Aorta (tissue), 5 donors: ENCODE measurements at regions of chr20 and their contacts with region 1.

Region 1: DNA sequence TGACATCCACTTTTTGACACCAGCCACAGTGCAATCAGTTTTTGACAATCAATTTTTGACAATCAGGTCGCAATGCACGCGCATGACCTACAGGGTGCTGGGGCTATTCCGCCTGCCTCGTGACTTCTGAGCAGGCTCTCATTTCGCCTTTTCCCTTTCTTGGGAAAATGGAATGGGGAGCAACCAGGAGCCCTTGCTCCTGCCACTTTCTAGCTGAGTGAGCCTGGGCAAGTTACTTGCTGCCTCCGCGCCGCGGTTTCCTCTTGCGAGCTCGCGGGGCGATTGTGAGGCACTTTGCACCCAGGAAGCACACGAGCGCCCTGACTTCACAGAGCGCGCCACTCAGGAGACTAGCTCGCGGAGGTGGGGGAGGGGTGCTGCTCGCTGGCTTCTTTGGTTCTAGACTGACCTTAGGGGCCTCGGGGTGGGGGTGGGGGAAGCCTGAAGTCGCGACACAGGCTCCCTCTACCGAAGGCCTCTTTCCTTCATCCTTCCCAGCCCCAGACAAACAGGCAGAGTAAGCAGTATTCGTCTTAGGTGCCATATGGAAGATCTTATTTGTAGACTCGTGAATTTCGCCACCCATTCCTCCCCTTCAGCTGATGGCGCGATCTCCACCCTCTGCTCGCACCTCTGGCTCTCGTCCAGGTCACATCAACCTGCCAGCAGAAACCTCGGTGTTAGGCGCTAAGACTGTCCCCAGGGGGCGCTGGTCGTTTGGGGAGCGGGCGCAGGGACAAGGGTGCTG is 4.6 kb downstream of the TP53TG5 start:
- DNase-seq: peak; percentile 95 to 98
- ATAC-seq: peak; percentile 92
- H3K4me3 ChIP-seq: peak overlapping the region; percentile 37 to 46
- H3K27ac ChIP-seq: peak overlapping the region; percentile 44 to 92
- H3K4me1 ChIP-seq: no peaks in the 10 kb centered on the region
- H3K27me3 ChIP-seq: no peaks in the 10 kb centered on the region

Region 2: GRCh38 chr20:45406259-45407066 is 32.9 kb after region 1 on chr20:
- intact Hi-C with region 1: loop called in 1 of 2 experiments (anchors 1 kb)
- DNase-seq: peak; percentile 87 to 96
- ATAC-seq: peak; percentile 85
- H3K4me3 ChIP-seq: peak overlapping the region; percentile 76 to 85
- H3K27ac ChIP-seq: peak overlapping the region; percentile 68 to 95
- H3K4me1 ChIP-seq: peaks cover 2 to 9% of the 10 kb centered on the region in 2 donors
- H3K27me3 ChIP-seq: no peaks in the 10 kb centered on the region

Region 3: DNA sequence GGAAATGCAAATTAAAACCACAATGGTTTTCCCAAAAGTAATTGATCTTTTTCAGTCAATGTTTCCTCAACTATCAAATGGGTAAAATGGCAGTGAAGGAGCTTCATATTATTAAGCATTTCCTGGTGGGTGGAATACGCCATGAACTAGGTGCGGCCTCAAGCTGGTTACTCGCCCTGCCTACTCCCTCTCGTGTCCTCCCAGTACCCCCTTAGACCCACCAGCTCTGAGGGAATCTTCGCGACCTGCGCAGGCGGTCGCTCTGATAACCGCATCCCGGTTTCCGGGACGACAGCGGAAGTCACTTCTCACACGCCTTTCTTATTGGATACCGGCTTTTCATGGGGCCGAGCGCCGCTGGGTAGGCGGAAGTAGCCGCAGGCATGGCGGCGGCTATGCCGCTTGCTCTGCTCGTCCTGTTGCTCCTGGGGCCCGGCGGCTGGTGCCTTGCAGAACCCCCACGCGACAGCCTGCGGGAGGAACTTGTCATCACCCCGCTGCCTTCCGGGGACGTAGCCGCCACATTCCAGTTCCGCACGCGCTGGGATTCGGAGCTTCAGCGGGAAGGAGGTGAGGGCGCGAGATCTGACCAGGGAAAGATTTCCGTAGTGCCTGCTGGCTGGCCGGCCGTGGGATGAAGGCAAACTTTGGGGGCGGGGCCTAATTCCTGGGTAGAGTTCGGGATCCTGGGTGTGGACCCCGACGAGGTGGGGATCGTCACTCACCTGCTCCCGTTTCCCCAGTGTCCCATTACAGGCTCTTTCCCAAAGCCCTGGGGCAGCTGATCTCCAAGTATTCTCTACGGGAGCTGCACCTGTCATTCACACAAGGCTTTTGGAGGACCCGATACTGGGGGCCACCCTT is 42.5 kb after region 1 on chr20 and contains the start of gene PIGT:
- intact Hi-C with region 1: loop called in 1 of 2 experiments (anchors 5 kb)
- DNase-seq: peak; percentile 92 to 93
- ATAC-seq: peak; percentile 93
- H3K4me3 ChIP-seq: peak within 1 kb of the TSS; percentile 57 to 82
- H3K27ac ChIP-seq: peak within 1 kb of the TSS; percentile 44 to 71
- H3K4me1 ChIP-seq: no peaks in the 10 kb centered on the region
- H3K27me3 ChIP-seq: no peaks in the 10 kb centered on the region
- total RNA-seq, gene PIGT: 113 TPM

Region 4: GRCh38 chr20:45436732-45437391 is 63.3 kb after region 1 on chr20:
- intact Hi-C with region 1: loop called (anchors 2 to 5 kb)
- DNase-seq: peak; percentile 93 to 97
- ATAC-seq: peak; percentile 97
- H3K4me3 ChIP-seq: peak overlapping the region; percentile 46 to 55
- H3K27ac ChIP-seq: peak overlapping the region in 1 of 2 donors; percentile 64
- H3K4me1 ChIP-seq: no peaks in the 10 kb centered on the region
- H3K27me3 ChIP-seq: no peaks in the 10 kb centered on the region